ENCODE measurements at regions of chr17 and their contacts with region 1.

Region 1: GRCh38 chr17:74748529-74749365 is at the start of gene NHERF1:
- DNase-seq: peak; percentile 99
- H3K4me3 Mint-ChIP-seq: peak within 1 kb of the TSS; percentile 97
- H3K27ac Mint-ChIP-seq: peak within 1 kb of the TSS; percentile 93
- H3K4me1 Mint-ChIP-seq: peaks cover 60% of the 10 kb centered on the region
- H3K27me3 Mint-ChIP-seq: no peaks in the 10 kb centered on the region
- total RNA-seq, gene NHERF1: 134 and 138 TPM in 2 replicates

Region 2: DNA sequence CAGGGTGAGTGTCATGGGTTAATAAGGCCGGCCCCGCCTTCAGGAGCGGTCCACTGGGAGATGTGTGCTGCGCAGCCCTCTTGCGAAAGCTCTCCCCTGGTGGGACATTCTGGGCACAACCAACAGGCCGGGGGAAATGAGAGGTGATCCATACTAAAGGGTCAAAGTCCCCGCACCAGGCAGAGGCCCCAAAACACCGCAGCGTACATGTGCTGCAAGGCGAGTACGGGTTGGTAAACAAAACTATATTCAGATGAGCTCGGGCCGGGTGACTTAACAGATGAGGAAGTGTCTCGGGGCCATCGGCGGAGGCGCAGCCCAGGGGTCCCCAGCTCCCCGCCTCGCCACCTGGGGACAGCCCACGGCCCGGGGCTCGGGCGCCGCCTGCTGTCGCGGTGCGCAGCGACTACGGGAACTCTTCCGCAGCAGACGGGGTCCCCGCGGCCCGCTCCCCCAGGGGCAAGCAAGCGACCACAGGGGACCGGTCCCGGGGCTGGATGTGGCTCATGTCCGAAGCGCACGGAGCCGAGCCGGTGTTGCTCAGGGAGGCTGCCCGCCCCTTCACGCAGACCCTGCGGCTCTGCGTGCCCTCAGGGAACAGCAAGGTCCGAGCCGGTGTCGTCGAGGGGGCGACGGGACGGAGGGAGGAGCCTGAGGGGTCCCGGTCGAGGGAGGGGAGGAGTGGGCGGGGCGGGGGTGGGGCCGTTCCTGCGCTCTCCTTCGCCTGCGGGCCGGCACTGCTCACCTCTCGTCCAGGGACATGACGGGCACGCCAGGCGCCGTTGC is 12.0 kb before region 1 on chr17 and contains the start of gene RAB37:
- intact Hi-C with region 1: loop called (anchors 1 kb)
- DNase-seq: peak; percentile 85
- H3K4me3 Mint-ChIP-seq: peak within 1 kb of the TSS; percentile 89
- H3K27ac Mint-ChIP-seq: peak within 1 kb of the TSS; percentile 80
- H3K4me1 Mint-ChIP-seq: peaks cover 51% of the 10 kb centered on the region
- H3K27me3 Mint-ChIP-seq: peaks cover 10% of the 10 kb centered on the region
- total RNA-seq, gene RAB37: 5.5 and 7.5 TPM in 2 replicates

Region 3: DNA sequence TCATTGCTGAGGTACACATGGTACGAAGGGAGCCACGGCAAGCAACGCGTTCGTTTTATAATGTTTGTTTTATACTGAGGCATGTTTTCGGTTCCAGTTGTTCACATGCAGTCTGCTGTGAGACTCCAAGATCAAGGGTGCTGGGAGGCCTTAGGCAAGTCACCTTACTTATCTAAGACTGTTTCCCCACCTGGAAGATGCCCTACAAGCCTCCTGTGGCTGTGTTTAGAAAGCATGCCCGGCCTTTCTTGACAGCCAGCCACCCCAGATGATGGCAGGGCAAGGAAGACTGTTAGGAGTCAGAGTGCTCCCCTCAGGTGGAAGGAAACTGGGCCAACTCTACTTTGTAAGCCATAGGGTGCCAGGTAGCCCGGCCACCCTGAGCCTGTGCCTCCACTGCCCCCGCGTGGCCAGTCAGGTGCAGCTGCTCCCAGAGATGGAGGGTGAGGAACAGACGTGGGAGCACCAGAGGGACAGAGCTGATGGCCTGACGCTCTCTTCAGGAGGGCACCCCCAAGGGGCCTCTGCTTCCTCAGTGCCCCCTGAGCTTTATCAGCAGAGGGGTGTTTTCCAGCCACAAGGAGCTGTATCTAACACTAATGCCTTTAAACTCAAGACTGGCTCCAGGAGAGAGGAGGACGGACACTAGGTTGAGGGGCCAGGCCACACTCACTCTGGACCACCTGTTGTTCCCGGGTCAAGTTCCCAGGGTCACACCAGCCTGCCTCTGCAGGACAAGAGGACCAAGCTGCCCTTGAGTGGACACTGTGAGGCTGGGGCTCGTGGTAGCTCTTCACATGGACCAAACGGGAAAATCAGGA is 22.0 kb after region 1 on chr17:
- intact Hi-C with region 1: loop called (anchors 1 kb)
- DNase-seq: peak; percentile 91
- H3K4me3 Mint-ChIP-seq: no peak overlapping the region
- H3K27ac Mint-ChIP-seq: peak overlapping the region; percentile 65
- H3K4me1 Mint-ChIP-seq: peaks cover 19% of the 10 kb centered on the region
- H3K27me3 Mint-ChIP-seq: no peaks in the 10 kb centered on the region

Region 4: DNA sequence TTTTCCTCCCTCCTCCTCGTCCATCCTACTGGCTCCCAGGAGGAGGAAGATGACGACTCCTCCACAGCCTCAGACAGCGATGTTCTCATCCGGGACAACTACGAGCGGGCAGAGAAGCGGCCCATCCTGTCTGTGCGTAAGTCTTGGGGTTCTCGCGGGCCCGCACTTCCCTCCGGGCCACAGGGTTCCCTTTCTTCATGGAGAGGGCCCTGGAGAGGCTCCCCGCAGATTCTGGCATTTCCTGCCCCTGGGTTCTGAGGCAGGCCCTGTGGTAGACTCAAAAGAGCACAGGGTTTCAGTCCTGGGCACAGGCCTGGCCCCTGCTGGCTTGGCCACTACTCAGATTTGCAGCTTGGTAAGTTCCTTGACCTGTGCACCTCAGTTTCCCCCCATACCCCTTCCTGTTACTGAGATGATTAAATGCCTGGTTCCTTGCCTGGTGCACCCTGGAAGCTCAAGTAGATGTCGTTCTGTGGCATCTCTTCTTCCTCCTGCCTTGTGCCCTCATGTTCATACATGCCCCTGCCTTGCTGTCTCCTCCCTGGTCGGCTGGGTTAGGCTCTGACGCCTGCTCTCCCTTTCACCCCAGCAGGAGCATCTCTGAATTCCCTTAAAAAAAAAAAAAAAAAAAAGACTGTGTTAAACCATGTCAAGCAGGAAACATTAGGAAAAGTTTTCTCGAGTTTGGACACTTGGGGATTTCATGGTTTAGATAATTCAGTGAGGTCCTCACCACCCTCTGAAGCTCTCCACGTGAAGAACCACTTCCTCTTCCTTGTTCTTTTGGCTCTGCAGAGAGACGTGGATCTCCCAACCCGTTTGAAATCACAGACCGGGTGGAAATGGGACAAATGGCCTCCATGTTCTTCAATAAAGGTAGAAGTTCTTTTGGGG is 41.7 kb after region 1 on chr17:
- intact Hi-C with region 1: loop called (anchors 1 kb)
- DNase-seq: peak; percentile 62
- H3K4me3 Mint-ChIP-seq: peak overlapping the region; percentile 59
- H3K27ac Mint-ChIP-seq: peak overlapping the region; percentile 83
- H3K4me1 Mint-ChIP-seq: peaks cover 34% of the 10 kb centered on the region
- H3K27me3 Mint-ChIP-seq: no peaks in the 10 kb centered on the region

Region 5: GRCh38 chr17:74807925-74808324 is 59.2 kb after region 1 on chr17:
- intact Hi-C with region 1: no loop called
- DNase-seq: no peak
- H3K4me3 Mint-ChIP-seq: no peak overlapping the region
- H3K27ac Mint-ChIP-seq: no peak overlapping the region
- H3K4me1 Mint-ChIP-seq: no peaks in the 10 kb centered on the region
- H3K27me3 Mint-ChIP-seq: no peaks in the 10 kb centered on the region

Region 6: DNA sequence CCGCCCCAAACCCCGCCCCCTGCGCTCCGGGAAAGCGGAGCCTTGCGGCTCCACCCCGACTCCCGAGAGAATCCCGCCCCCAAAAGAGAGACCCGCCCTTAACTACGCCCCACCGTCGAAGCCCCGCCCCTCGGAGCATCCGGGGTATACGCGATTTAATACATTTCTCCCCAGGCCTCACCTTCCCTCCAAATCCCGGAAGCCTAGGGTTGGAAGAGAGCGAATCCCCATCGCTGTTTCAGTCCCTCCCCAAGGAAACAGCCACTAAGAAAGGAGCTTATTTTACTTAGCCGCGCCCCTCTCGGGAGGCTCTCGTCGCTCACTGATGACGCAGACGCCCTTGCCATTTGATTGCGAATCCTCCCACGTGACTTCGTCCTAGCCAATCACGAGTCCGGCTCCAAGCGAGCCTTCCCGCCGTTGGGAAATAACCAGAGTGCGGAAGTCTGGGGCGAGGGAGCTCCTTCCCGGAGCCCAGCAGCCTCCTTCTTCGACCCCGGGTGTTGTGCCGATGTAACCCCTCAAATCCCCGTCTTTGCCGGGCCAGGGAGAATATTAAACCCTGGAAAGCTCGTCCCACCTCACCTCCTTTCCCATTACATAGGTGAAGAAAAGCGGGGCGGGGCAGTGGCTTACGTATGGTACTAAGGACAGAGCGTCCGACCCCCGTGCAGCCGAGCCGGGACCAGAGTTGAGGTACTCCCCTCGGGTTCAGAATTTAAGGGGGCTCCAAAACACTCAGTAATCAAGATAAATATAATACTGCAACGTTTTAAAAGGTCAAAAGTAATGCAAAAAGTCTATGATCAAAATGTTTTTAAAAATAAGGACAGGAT is 124.5 kb after region 1 on chr17:
- intact Hi-C with region 1: loop called (anchors 1 kb)
- DNase-seq: peak; percentile 99
- H3K4me3 Mint-ChIP-seq: peak overlapping the region; percentile 89
- H3K27ac Mint-ChIP-seq: peak overlapping the region; percentile 84
- H3K4me1 Mint-ChIP-seq: peaks cover 30% of the 10 kb centered on the region
- H3K27me3 Mint-ChIP-seq: no peaks in the 10 kb centered on the region

Measured in activated CD4-positive, alpha-beta T cell treated with anti-CD3 and anti-CD28 coated beads, Interleukin-2, amount 10 ng/mL, durations not matched to agents 24 days and 14 days (primary cell).